GM10248 (cell line): ENCODE measurements at regions of chr6 and their contacts with region 1.

Region 1: GRCh38 chr6:5365436-5366195 is 104.3 kb downstream of the FARS2 start:
- DNase-seq: no peak
- CTCF ChIP-seq: no peak

Region 2: GRCh38 chr6:5287205-5287965 is 78.2 kb before region 1 on chr6:
- CTCF ChIA-PET with region 1: no interaction called
- POLR2A ChIA-PET with region 1: no interaction called
- DNase-seq: no peak
- CTCF ChIP-seq: no peak

Region 3: DNA sequence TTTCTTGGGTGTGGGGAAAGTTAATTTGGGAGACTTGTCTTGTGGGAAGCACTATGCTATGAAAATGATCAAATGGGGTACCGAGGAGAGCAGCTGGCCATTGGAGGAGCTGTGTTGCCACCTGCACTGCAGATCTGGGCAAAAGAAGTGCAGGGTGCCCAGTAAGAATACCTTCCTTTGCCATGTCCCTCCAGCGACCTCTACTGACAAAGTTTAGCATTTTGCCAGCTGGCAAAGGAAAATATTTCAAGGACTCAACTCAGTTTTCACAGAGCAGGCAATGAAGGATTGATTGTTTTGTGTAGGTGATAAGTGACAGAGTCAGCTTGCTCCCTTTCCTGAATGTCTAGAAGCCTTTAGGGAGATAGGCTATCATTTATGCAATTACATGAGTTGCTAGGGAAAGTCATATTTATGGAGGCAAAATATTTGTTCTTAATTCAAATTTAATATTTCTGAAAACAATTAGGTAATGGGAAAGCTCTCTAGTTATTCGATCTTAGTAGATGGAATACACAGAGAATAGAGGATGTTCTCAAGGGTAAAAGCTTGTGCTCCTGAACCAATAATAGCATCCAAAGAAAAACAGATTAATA is 14.1 kb after region 1 on chr6:
- CTCF ChIA-PET with region 1: interaction called, 11 read pairs
- POLR2A ChIA-PET with region 1: no interaction called
- DNase-seq: peak; percentile 54
- CTCF ChIP-seq: peak; percentile 56